ENCODE measurements at regions of chr1 and their contacts with region 1.

Region 1: DNA sequence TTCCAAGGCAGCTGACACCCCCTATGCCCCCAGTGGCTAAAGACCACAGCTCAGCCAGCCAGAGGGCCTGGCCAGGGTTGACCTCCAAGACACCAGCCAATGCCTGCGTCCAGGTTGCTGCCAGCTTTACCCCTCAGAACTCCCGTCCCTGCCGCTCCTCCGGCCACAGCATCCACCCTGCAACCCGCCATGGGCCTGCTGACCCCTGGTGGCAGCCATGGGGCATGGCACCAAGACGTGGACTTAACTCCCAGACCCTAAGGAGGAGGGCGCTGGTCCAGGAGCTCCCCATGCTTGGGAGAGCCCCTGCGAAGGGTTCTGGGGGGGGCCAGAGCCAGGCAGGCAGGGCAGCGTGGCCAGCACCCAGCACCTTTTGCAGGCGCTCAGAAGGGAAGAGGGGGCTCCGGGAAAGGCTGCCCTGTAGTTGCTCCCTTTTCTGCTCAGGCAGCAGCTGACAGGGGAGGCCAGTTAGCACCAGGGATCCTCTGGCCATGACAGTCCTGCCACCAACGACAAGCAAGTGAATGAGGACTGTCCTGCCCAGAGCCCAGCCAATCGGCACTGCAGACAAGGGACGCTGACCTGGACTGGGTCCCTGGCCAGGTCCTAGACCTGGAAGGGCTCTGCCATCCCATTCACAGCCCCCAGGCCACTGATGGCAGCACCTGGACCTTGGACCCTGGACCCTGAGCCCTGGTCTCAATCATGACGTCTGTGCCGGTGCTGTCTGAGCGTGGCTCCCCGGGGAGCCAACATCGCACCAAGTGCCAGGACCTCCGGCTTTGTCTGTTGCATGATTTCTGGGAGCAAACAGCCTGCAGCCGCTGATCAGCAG is 246.2 kb downstream of the NPHP4 start:
- DNase-seq: peak; percentile 70 to 92
- H3K4me3 ChIP-seq: no peak overlapping the region
- H3K27ac ChIP-seq: no peak overlapping the region
- H3K4me1 ChIP-seq: peaks cover 4 to 16% (median 10%) of the 10 kb centered on the region in 4 experiments
- H3K27me3 ChIP-seq: no peaks in the 10 kb centered on the region
- CTCF ChIP-seq: peak; percentile 97 to 99 (median 98)
- EP300 ChIP-seq: no peak; a peak in 1 of 3 replicates
- POLR2A ChIP-seq: no peak
- RAD21 ChIP-seq: peak; percentile 96 to 100

Region 2: DNA sequence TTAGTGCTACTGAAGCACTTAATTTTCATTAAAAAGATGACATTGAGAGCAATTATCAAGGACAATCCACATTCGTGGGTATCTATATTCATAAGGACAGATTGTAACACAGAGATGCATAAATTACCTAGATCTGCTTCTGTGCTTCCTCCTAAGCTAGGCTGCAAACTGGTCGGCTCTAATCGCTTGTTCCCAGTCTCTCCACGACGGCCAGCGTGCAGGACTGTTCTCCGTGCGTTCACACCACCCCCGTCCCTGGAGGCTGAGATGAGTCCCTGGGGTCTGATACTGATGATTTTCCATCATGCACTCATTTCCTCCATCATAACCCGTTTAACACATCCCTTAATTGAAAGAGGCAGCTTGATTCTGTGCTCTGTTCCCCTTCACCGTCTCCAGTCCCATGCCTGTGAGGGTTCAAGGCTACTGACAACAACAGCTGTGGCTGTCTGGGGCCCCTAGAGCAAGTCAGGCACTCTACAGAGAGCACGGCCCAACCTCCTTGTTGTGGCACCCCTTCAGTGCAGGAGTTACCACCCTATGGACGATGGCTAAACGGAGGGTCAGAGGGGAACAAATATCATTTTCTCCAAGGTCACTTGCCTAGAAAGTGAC is 223.4 kb before region 1 on chr1:
- CTCF ChIA-PET with region 1: interaction called, 11 read pairs
- POLR2A ChIA-PET with region 1: no interaction called
- DNase-seq: no peak
- H3K4me3 ChIP-seq: no peak overlapping the region
- H3K27ac ChIP-seq: no peak overlapping the region
- H3K4me1 ChIP-seq: no peaks in the 10 kb centered on the region; a peak in 1 of 7 replicates
- H3K27me3 ChIP-seq: peaks cover 0 to 3% (median 0%) of the 10 kb centered on the region in 4 experiments; a peak in 1 of 7 replicates
- CTCF ChIP-seq: no peak
- EP300 ChIP-seq: no peak
- POLR2A ChIP-seq: no peak
- RAD21 ChIP-seq: no peak

Region 3: GRCh38 chr1:5643360-5644090 is 102.5 kb before region 1 on chr1:
- CTCF ChIA-PET with region 1: interaction called, 57 read pairs
- POLR2A ChIA-PET with region 1: no interaction called
- DNase-seq: peak in 1 of 2 experiments; percentile 44
- H3K4me3 ChIP-seq: no peak overlapping the region
- H3K27ac ChIP-seq: no peak overlapping the region
- H3K4me1 ChIP-seq: peaks cover 0 to 4% (median 1%) of the 10 kb centered on the region in 4 experiments; a peak in 1 of 7 replicates
- H3K27me3 ChIP-seq: no peaks in the 10 kb centered on the region
- CTCF ChIP-seq: no peak; a peak in 1 of 4 replicates
- EP300 ChIP-seq: no peak
- POLR2A ChIP-seq: no peak
- RAD21 ChIP-seq: peak in 1 of 2 experiments; percentile 37; a peak in 2 of 4 replicates

Region 4: GRCh38 chr1:5718831-5719632 is 27.0 kb before region 1 on chr1:
- CTCF ChIA-PET with region 1: interaction called, 40 read pairs
- POLR2A ChIA-PET with region 1: no interaction called
- DNase-seq: no peak
- H3K4me3 ChIP-seq: no peak overlapping the region
- H3K27ac ChIP-seq: no peak overlapping the region
- H3K4me1 ChIP-seq: peaks cover 3 to 18% (median 13%) of the 10 kb centered on the region in 4 experiments
- H3K27me3 ChIP-seq: peaks cover 0 to 2% (median 0%) of the 10 kb centered on the region in 4 experiments; a peak in 3 of 7 replicates
- CTCF ChIP-seq: peak; percentile 37 to 47 (median 42)
- EP300 ChIP-seq: no peak
- POLR2A ChIP-seq: no peak
- RAD21 ChIP-seq: peak; percentile 61 to 67

Region 5: DNA sequence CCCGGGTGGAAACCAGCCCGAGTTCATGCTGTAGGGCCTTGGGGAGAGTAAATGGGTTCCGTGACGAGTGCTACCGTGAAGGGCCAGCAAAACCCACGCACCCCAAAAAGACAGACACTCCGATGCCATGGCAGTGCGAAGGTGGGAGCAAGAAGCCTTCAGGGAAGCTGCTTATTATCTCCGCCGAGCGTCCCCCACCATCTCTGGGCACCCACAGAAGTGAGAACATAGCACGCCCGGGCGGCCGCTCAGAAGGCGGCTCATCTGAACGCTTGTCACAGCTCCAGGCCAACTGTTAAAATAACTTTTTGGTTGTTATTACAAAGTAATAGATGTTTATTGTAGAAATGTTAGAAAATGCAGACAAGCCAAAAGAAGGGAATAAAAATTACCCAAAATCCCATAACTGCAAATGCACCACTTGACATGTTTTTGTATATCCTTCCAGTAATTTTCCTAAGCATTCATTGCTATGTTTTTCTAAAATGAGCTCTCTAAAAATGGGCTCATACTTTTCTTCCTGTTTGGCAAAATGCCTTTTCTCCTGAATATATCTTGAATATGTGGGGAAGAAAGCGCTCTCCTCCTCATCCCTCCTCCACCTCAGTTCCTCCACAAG is 11.3 kb after region 1 on chr1:
- CTCF ChIA-PET with region 1: interaction called, 21 read pairs
- POLR2A ChIA-PET with region 1: no interaction called
- DNase-seq: no peak
- H3K4me3 ChIP-seq: no peak overlapping the region
- H3K27ac ChIP-seq: no peak overlapping the region
- H3K4me1 ChIP-seq: peaks cover 2 to 4% (median 3%) of the 10 kb centered on the region in 4 experiments; a peak in 4 of 7 replicates
- H3K27me3 ChIP-seq: no peaks in the 10 kb centered on the region
- CTCF ChIP-seq: no peak
- EP300 ChIP-seq: no peak
- POLR2A ChIP-seq: no peak
- RAD21 ChIP-seq: no peak

Region 6: GRCh38 chr1:5943343-5944124 is 197.5 kb after region 1 on chr1:
- CTCF ChIA-PET with region 1: no interaction called
- POLR2A ChIA-PET with region 1: no interaction called
- DNase-seq: peak in 1 of 2 experiments; percentile 20
- H3K4me3 ChIP-seq: no peak overlapping the region
- H3K27ac ChIP-seq: no peak overlapping the region
- H3K4me1 ChIP-seq: no peaks in the 10 kb centered on the region
- H3K27me3 ChIP-seq: no peaks in the 10 kb centered on the region
- CTCF ChIP-seq: no peak
- EP300 ChIP-seq: no peak
- POLR2A ChIP-seq: no peak
- RAD21 ChIP-seq: no peak

Measured in H1 (cell line).